ENCODE measurements at regions of chr2 and their contacts with region 1.

Region 1: GRCh38 chr2:235746257-235747084 is 252.6 kb downstream of the AGAP1 start:
- DNase-seq: peak; percentile 22
- H3K4me3 Mint-ChIP-seq: no peak overlapping the region
- H3K27ac Mint-ChIP-seq: no peak overlapping the region
- H3K4me1 Mint-ChIP-seq: no peaks in the 10 kb centered on the region
- H3K27me3 Mint-ChIP-seq: peaks cover 2% of the 10 kb centered on the region

Region 2: GRCh38 chr2:235135990-235136561 is 610.4 kb before region 1 on chr2:
- intact Hi-C with region 1: loop called (anchors 5 kb)
- DNase-seq: peak; percentile 14
- H3K4me3 Mint-ChIP-seq: no peak overlapping the region
- H3K27ac Mint-ChIP-seq: no peak overlapping the region
- H3K4me1 Mint-ChIP-seq: peaks cover 2% of the 10 kb centered on the region
- H3K27me3 Mint-ChIP-seq: peaks cover 6% of the 10 kb centered on the region

Region 3: GRCh38 chr2:235836491-235836926 is 90.0 kb after region 1 on chr2:
- intact Hi-C with region 1: no loop called
- DNase-seq: no peak
- H3K4me3 Mint-ChIP-seq: no peak overlapping the region
- H3K27ac Mint-ChIP-seq: no peak overlapping the region
- H3K4me1 Mint-ChIP-seq: no peaks in the 10 kb centered on the region
- H3K27me3 Mint-ChIP-seq: no peaks in the 10 kb centered on the region